SK-N-SH (cell line): ENCODE measurements at regions of chr5 and their contacts with region 1.

Region 1: DNA sequence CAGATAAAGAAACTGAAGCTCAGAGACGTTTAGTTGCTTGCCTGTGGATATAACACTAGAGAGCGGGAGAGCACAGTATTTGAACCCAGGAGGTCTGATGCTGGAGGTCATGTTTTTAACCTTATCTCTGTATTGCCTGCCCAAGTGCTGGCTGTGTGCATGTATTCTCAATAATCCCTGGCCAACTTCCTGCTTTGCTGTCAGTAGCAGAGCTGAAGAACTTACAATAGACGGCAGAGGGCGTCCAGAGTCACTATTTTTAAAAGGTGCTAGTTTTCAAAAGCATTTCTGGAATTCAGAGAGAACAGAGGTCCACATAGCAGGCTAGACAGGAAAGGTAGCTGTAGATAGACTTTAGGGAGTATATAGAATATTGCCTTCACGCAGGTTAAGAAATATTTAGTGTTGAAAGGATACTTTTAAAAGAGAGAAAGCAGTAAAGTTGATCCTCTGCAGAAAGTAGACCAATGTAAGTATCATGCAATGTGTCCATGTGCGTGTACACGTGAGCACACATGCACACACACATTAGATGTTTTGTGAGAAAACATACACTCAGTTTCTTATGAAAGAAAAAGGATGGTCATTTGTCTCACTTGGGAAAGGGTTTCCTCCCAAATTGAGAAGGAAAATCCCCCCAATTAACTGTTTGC is 46.3 kb downstream of the PTCD2 start:
- DNase-seq: peak; percentile 53
- H3K4me3 ChIP-seq: no peak overlapping the region
- H3K27ac ChIP-seq: peak overlapping the region; percentile 26 to 36; a peak in 2 of 4 replicates
- H3K4me1 ChIP-seq: peaks cover 10 to 19% of the 10 kb centered on the region in 2 experiments; a peak in 3 of 4 replicates
- H3K27me3 ChIP-seq: no peaks in the 10 kb centered on the region
- CTCF ChIP-seq: peak; percentile 88
- EP300 ChIP-seq: no peak
- RAD21 ChIP-seq: peak; percentile 94

Region 2: GRCh38 chr5:72210888-72211678 is 155.4 kb before region 1 on chr5:
- CTCF ChIA-PET with region 1: no interaction called
- POLR2A ChIA-PET with region 1: no interaction called
- DNase-seq: no peak
- H3K4me3 ChIP-seq: peak overlapping the region in 1 of 2 experiments; percentile 18; a peak in 2 of 4 replicates
- H3K27ac ChIP-seq: peak overlapping the region; percentile 83 to 94
- H3K4me1 ChIP-seq: peaks cover 20 to 57% of the 10 kb centered on the region in 2 experiments
- H3K27me3 ChIP-seq: no peaks in the 10 kb centered on the region
- CTCF ChIP-seq: no peak
- EP300 ChIP-seq: peak in 1 of 2 experiments; percentile 49; a peak in 1 of 4 replicates
- RAD21 ChIP-seq: no peak

Region 3: GRCh38 chr5:72378636-72379290 is 12.3 kb after region 1 on chr5:
- CTCF ChIA-PET with region 1: interaction called, 24 read pairs
- POLR2A ChIA-PET with region 1: no interaction called
- DNase-seq: peak; percentile 21
- H3K4me3 ChIP-seq: no peak overlapping the region
- H3K27ac ChIP-seq: peak overlapping the region; percentile 16 to 29; a peak in 3 of 4 replicates
- H3K4me1 ChIP-seq: peaks cover 0 to 13% of the 10 kb centered on the region in 2 experiments; a peak in 2 of 4 replicates
- H3K27me3 ChIP-seq: no peaks in the 10 kb centered on the region
- CTCF ChIP-seq: no peak
- EP300 ChIP-seq: peak in 1 of 2 experiments; percentile 62; a peak in 1 of 4 replicates
- RAD21 ChIP-seq: no peak

Region 4: GRCh38 chr5:72427488-72428437 is 61.3 kb after region 1 on chr5:
- CTCF ChIA-PET with region 1: no interaction called
- POLR2A ChIA-PET with region 1: no interaction called
- DNase-seq: no peak
- H3K4me3 ChIP-seq: no peak overlapping the region
- H3K27ac ChIP-seq: peak overlapping the region in 1 of 2 experiments; percentile 28; a peak in 1 of 4 replicates
- H3K4me1 ChIP-seq: peaks cover 0 to 9% of the 10 kb centered on the region in 2 experiments; a peak in 2 of 4 replicates
- H3K27me3 ChIP-seq: no peaks in the 10 kb centered on the region
- CTCF ChIP-seq: no peak
- EP300 ChIP-seq: no peak
- RAD21 ChIP-seq: no peak

Region 5: DNA sequence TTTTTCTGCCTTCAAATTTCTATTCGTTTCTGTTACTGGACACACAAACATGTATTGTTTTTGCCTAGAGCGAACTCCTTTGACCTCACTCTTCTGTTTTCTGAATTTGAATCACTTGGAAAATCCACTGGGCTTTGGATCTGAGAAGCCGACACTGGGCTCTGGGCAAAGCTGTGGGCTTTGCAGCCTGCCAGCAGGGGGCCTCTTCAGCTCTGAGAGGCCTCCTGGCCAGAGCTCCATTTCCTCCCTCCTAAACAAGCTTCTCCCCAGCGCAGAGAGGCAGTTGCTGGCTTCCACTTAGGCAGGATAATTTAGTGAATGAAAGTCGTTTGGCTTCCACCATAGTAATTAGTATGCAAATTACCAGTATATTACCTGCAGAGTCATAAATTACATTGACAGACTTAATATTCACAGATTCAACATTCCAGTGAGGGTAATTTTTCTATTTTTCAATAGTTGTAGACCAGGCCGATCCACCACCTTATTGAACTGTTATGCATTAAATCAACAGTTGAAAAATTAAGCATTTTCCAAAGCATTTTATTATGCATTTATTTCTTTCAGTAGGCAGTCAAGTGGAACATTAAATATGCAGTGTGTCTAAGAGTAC is 244.8 kb after region 1 on chr5:
- CTCF ChIA-PET with region 1: interaction called, 25 read pairs
- POLR2A ChIA-PET with region 1: no interaction called
- DNase-seq: peak; percentile 66
- H3K4me3 ChIP-seq: peak overlapping the region in 1 of 2 experiments; percentile 16; a peak in 1 of 4 replicates
- H3K27ac ChIP-seq: peak overlapping the region in 1 of 2 experiments; percentile 66; a peak in 2 of 4 replicates
- H3K4me1 ChIP-seq: peaks cover 0 to 26% of the 10 kb centered on the region in 2 experiments; a peak in 2 of 4 replicates
- H3K27me3 ChIP-seq: no peaks in the 10 kb centered on the region
- CTCF ChIP-seq: peak; percentile 96
- EP300 ChIP-seq: no peak
- RAD21 ChIP-seq: peak; percentile 86

Region 6: GRCh38 chr5:72816311-72817145 is 450.1 kb after region 1 on chr5 and contains the start of gene TNPO1:
- CTCF ChIA-PET with region 1: interaction called, 64 read pairs
- POLR2A ChIA-PET with region 1: interaction called, 4 read pairs
- DNase-seq: peak; percentile 92
- H3K4me3 ChIP-seq: peak within 1 kb of the TSS; percentile 86 to 95
- H3K27ac ChIP-seq: peak within 1 kb of the TSS; percentile 98 to 99
- H3K4me1 ChIP-seq: peaks cover 7 to 12% of the 10 kb centered on the region in 2 experiments; a peak in 3 of 4 replicates
- H3K27me3 ChIP-seq: no peaks in the 10 kb centered on the region
- CTCF ChIP-seq: no peak
- EP300 ChIP-seq: no peak; a peak in 1 of 4 replicates
- RAD21 ChIP-seq: no peak; the same call in 1 of the 2 replicates
- polyA plus RNA-seq, gene TNPO1: 19.9 and 27.9 TPM in 2 replicates